Panc1 (cell line): ENCODE measurements at regions of chr1 and their contacts with region 1.

Region 1: GRCh38 chr1:61588736-61589672 is 135.9 kb downstream of the TM2D1 start:
- DNase-seq: peak; percentile 50
- ATAC-seq: peak; percentile 96
- H3K4me3 ChIP-seq: no peak overlapping the region
- H3K27ac ChIP-seq: no peak overlapping the region
- H3K4me1 ChIP-seq: peaks cover 3% of the 10 kb centered on the region
- H3K27me3 ChIP-seq: no peaks in the 10 kb centered on the region; the same call in 1 of the 2 replicates
- CTCF ChIP-seq: peak; percentile 93

Region 2: DNA sequence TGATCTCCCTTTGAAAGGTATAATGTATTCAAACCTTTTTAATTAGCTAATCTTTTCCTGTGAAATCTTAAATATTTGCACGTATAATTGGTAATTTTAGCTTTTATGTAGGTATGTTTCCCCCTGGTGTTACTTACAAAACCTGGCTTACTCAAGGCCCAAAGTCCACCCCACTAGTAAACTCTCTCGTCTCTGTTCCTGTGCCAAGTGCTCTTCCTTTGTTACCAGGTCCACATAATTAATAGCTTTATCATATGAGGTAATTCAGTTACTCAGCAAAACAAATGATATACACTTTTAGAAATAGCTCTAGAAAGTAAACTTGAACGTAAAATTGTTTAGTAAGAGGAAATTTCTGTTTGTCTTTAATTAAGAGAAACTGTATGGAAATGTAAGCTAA is 469.9 kb before region 1 on chr1:
- CTCF ChIA-PET with region 1: interaction called, 16 read pairs
- POLR2A ChIA-PET with region 1: no interaction called
- in situ Hi-C with region 1: no loop called
- intact Hi-C with region 1: no loop called
- DNase-seq: no peak
- ATAC-seq: no peak
- H3K4me3 ChIP-seq: no peak overlapping the region
- H3K27ac ChIP-seq: no peak overlapping the region
- H3K4me1 ChIP-seq: peaks cover 6% of the 10 kb centered on the region
- H3K27me3 ChIP-seq: no peaks in the 10 kb centered on the region
- CTCF ChIP-seq: no peak

Region 3: GRCh38 chr1:61486783-61487505 is 102.1 kb before region 1 on chr1:
- CTCF ChIA-PET with region 1: interaction called, 11 read pairs
- POLR2A ChIA-PET with region 1: no interaction called
- in situ Hi-C with region 1: no loop called
- intact Hi-C with region 1: no loop called
- DNase-seq: no peak
- ATAC-seq: no peak
- H3K4me3 ChIP-seq: no peak overlapping the region
- H3K27ac ChIP-seq: no peak overlapping the region
- H3K4me1 ChIP-seq: no peaks in the 10 kb centered on the region
- H3K27me3 ChIP-seq: no peaks in the 10 kb centered on the region
- CTCF ChIP-seq: no peak

Region 4: DNA sequence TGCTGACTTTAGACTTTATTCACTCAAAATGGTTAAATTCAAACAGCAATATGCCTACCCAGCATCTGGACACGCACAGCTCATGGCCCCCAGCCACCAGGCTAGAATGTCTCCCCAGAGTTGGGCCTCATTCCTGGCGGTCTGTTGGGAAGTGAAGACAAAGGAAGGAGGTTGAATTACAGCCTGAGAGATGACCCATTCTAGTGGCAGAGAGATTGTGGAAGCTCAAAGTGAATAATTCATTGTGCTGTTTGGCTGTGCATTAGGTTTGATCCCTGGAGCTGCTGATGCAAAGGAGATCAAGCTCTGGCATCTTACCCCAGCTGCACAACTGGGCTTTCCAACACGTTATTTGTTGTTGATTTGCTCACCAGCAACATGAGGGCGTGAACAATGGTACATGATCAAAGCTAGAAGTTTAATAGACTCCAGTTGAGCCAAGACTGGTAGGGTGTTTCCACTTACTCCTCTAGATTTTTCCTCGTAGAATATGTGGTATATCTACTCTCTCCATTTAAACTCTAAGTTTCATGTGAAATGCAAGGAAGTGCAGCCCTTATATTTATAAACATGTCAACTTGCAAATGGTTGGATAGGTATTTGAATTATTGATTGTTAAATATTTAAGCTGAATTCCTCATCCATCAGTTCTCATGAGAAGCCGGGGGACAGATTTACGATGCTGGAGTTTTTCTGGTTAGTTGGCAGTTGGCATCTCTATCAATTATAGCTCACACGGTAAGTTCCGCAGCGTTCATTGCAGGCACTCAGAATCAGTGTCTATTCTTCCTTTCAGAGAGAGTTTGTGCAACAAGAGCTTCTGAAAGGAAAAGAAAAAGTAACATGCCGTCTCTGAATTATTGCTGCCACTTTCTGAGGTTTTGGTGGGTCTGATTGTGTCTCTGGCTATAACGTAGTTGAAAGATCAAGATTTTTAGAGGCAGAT is 86.8 kb before region 1 on chr1:
- CTCF ChIA-PET with region 1: no interaction called
- POLR2A ChIA-PET with region 1: no interaction called
- in situ Hi-C with region 1: no loop called
- intact Hi-C with region 1: no loop called
- DNase-seq: no peak
- ATAC-seq: no peak
- H3K4me3 ChIP-seq: no peak overlapping the region
- H3K27ac ChIP-seq: no peak overlapping the region
- H3K4me1 ChIP-seq: no peaks in the 10 kb centered on the region
- H3K27me3 ChIP-seq: no peaks in the 10 kb centered on the region
- CTCF ChIP-seq: no peak